ENCODE measurements at regions of chr11 and their contacts with region 1.

Region 1: DNA sequence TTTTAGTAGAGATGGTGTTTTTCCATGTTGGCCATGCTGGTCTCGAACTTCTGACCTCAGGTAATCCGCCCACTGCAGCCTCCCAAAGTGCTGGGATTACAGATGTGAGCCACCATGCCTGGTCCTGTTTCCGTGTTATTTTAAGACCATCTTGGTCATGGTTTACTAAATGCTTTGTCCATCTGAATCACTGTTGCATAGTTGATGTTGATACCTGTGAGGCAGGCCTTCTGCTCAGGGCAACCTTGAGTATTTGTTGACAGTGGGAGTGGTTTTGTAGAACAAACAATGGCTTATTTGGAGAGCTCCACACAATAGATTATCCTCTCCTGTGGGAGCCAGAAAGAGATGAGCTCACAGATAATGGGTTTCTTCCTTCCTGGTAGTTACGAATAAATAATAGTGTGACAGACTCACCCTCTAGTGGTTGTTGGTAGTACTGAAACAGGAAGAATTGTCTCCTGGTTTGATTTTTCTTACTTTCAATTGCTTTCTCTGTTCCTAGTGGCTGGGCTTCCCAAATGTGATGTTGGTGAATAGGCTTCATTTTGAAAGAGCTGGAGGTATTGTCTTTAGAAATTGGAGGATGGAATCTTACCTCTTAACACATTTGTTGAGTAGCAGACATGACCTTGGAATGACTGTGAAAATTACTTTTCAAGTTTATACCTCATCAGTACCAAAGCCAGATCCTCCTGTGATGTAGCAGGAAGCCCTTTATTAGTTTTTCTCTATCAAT is 39.0 kb downstream of the CTNND1 start:
- DNase-seq: peak in 2 of 6 donors; percentile 45 to 51
- ATAC-seq: peak; percentile 68 to 87 (median 82)
- H3K4me3 ChIP-seq: no peak overlapping the region
- H3K27ac ChIP-seq: peak overlapping the region; percentile 19 to 73 (median 49)
- H3K4me1 ChIP-seq: peaks cover 36 to 49% (median 37%) of the 10 kb centered on the region in 3 donors
- H3K27me3 ChIP-seq: no peaks in the 10 kb centered on the region
- CTCF ChIP-seq: peak; percentile 72 to 80 (median 74)

Region 2: DNA sequence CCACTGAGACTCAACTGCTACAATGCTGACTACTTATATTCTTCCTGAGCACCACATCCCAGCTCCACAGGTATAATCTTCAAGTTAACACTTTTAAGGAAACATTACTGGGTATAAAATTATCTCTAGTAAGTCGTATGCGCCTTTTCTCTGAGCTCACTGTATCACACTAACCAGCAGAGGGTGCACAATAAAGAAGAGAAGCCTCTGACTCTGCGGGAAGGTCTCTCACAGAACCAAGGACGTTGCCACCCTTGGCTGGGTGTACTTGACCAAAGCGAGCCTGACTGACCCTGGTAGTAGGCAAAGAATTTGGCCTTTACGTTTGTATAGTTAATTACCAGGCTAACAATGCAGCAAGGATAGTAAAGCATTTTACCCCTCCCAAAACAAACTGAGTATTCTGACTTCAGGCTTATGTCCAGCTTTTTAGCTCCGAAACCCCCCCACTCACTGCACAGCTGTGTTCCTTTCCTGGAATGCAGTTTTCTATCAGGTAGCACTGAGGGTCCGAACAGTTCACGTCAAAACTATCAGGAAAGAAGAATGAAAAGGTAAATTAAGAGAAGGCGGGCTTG is 48.8 kb before region 1 on chr11 and contains the start of gene BTBD18:
- intact Hi-C with region 1: loop called in 1 of 3 experiments (anchors 5 kb)
- DNase-seq: peak in 4 of 6 donors; percentile 40 to 62 (median 54)
- ATAC-seq: peak; percentile 91 to 100 (median 97)
- H3K4me3 ChIP-seq: no peak within 1 kb of the TSS
- H3K27ac ChIP-seq: no peak within 1 kb of the TSS
- H3K4me1 ChIP-seq: peaks cover 0 to 5% (median 4%) of the 10 kb centered on the region in 3 donors
- H3K27me3 ChIP-seq: no peaks in the 10 kb centered on the region
- CTCF ChIP-seq: peak in 3 of 4 donors; percentile 33 to 36 (median 35)
- total RNA-seq, gene BTBD18: not detected

Region 3: DNA sequence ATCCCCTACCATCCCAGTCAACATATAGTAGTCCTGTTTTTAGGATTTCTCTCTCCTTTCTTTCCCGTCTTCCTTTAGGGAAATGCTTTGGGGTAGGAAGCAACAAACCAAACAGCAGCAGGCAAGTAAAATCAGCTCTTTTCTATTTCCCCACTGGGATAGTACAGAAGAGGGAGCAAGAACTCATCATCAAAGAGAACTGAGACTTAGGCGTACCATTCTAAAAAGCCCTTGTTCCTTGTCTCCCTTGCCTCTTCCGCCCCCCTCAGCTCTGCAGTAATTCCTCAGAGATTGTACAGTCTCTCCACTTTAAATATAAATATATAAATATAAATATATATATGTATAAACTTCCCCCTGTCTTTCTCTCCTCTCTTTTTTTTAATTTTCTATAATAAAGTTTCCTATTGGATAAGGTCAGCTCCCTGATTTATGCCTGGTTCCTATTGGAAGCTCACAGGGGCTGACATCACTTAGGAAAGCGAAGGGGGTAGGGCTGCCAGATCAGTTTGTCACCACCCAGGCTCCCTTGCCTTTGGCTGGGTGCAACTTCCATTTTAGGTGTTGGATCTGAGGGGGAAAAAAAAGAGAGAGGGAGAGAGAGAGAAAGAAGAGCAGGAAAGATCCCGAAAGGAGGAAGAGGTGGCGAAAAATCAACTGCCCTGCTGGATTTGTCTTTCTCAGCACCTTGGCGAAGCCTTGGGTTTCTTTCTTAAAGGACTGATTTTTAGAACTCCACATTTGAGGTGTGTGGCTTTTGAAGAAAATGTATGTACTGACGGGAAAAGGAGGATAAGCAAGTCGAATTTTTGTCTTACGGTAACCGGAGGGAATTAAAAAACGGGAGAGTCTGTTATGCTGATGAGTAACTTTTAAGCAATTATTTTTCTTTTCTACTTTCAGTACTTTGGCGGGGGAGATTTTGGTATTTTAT is 39.0 kb before region 1 on chr11 and contains the start of gene CTNND1:
- intact Hi-C with region 1: loop called in 2 of 3 experiments (anchors 5 kb)
- DNase-seq: peak; percentile 78 to 92 (median 86)
- ATAC-seq: peak; percentile 96 to 99 (median 99)
- H3K4me3 ChIP-seq: peak within 1 kb of the TSS; percentile 39 to 57 (median 51)
- H3K27ac ChIP-seq: peak within 1 kb of the TSS; percentile 80 to 95 (median 90)
- H3K4me1 ChIP-seq: peaks cover 5 to 21% (median 17%) of the 10 kb centered on the region in 3 donors
- H3K27me3 ChIP-seq: no peaks in the 10 kb centered on the region
- CTCF ChIP-seq: no peak
- total RNA-seq, gene CTNND1: 113 to 203 (median 131) TPM